ENCODE measurements at regions of chr2 and their contacts with region 1.

Region 1: GRCh38 chr2:120740765-120741524 is 5.3 kb downstream of the GLI2 start:
- DNase-seq: peak; percentile 92
- H3K4me3 ChIP-seq: peak overlapping the region; percentile 53 to 62 (median 56)
- H3K27ac ChIP-seq: peak overlapping the region in 1 of 4 donors; percentile 49
- H3K4me1 ChIP-seq: peaks cover 12 to 60% (median 54%) of the 10 kb centered on the region in 4 donors
- H3K27me3 ChIP-seq: peaks cover 0 to 38% (median 0%) of the 10 kb centered on the region in 4 donors
- CTCF ChIP-seq: no peak
- EP300 ChIP-seq: no peak
- POLR2A ChIP-seq: no peak

Region 2: DNA sequence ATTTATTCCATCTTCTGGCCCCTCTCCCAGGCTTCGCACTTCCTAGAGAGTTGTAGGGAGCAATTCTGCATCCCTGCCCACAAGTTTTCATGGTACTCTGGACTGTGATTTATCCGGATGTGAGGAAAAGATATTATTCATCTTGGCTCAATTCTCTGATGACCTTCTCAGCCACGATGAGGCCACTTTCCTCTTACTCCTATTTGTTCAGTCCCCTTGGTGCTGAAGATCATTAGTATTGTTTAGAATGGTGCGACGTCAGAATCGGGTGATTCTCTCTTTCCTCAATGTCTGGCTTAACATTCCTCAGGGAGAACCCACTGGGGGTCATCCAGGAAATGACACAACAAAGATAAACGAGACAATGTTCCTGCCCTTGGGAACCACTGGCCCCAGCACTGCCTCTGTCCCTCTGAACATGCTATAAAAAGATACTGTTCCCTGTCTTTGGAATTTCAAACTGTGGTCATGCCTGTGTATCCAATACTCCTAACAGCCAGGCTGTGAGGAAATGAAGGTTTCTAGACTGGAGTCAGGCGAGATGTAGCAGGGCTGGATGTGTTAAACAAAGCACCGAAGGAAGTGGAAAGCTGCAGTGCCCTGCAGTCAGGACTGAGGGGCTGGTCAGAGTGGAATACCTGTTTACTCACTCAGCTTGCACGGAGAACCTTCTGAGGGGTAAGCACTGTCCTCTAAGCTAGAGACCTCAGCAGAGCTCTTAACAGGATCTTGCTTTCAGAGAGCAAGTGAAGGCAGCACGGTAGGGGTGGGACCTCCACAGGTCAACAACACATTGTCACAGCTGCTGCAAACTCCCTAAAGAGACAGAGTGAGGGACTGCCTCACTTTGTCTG is 18.1 kb before region 1 on chr2:
- intact Hi-C with region 1: no loop called
- DNase-seq: no peak
- H3K4me3 ChIP-seq: no peak overlapping the region
- H3K27ac ChIP-seq: peak overlapping the region in 1 of 4 donors; percentile 29
- H3K4me1 ChIP-seq: peaks cover 12 to 14% (median 13%) of the 10 kb centered on the region in 4 donors
- H3K27me3 ChIP-seq: no peaks in the 10 kb centered on the region
- CTCF ChIP-seq: no peak
- EP300 ChIP-seq: no peak
- POLR2A ChIP-seq: no peak

Region 3: GRCh38 chr2:120802158-120802557 is 61.2 kb after region 1 on chr2:
- intact Hi-C with region 1: loop called (anchors 10 kb)
- DNase-seq: no peak
- H3K4me3 ChIP-seq: no peak overlapping the region
- H3K27ac ChIP-seq: peak overlapping the region in 1 of 4 donors; percentile 43
- H3K4me1 ChIP-seq: peaks cover 8 to 86% (median 64%) of the 10 kb centered on the region in 4 donors
- H3K27me3 ChIP-seq: no peaks in the 10 kb centered on the region
- CTCF ChIP-seq: no peak
- EP300 ChIP-seq: no peak
- POLR2A ChIP-seq: no peak

Measured in esophagus muscularis mucosa (tissue), 4 donors.